MCF 10A (cell line): ENCODE measurements at regions of chr11 and their contacts with region 1.

Region 1: GRCh38 chr11:13949876-13950275 is 12.6 kb upstream of the SPON1 start:
- DNase-seq: no peak
- H3K4me3 Mint-ChIP-seq: no peak overlapping the region
- H3K27ac Mint-ChIP-seq: no peak overlapping the region
- H3K4me1 Mint-ChIP-seq: no peaks in the 10 kb centered on the region
- H3K27me3 Mint-ChIP-seq: no peaks in the 10 kb centered on the region
- CTCF ChIP-seq: no peak

Region 2: DNA sequence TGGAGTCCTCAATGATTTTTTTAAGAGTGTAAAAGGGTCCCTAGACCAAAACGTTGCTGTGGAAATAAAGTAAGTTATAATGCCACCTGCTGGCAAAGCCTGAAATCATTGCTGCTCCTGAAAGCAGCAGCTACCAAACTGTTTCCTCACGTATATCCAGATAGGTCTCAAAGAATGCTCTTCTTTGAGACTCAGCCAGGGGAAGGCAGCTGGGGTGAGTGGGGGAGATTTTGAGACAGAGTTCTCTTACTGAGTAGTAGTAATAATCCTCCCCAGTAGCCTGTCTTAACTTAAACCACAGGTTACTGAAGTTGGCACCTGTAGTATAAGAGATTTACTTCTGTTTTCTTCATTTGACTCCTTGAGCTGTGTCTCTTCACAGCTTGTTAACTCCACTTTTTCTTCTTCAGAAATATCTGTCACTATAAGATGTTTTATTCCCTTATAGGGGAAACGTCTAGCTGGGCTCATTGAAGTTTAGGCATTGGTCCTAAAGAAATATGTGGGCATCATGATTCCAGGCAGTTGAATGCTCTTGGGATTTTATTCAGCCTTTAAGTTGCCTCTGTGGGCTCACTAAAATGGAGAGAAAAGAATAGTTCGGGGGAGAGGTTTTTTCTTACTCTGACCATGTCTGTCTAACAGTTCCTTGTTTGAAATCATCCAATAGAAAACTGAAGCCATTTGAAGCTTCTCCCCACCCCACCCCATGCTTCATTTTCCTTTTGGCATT is 564.8 kb before region 1 on chr11:
- CTCF ChIA-PET with region 1: no interaction called
- POLR2A ChIA-PET with region 1: no interaction called
- intact Hi-C with region 1: no loop called
- DNase-seq: peak; percentile 34
- H3K4me3 Mint-ChIP-seq: no peak overlapping the region
- H3K27ac Mint-ChIP-seq: no peak overlapping the region
- H3K4me1 Mint-ChIP-seq: no peaks in the 10 kb centered on the region
- H3K27me3 Mint-ChIP-seq: no peaks in the 10 kb centered on the region
- CTCF ChIP-seq: peak; percentile 58

Region 3: DNA sequence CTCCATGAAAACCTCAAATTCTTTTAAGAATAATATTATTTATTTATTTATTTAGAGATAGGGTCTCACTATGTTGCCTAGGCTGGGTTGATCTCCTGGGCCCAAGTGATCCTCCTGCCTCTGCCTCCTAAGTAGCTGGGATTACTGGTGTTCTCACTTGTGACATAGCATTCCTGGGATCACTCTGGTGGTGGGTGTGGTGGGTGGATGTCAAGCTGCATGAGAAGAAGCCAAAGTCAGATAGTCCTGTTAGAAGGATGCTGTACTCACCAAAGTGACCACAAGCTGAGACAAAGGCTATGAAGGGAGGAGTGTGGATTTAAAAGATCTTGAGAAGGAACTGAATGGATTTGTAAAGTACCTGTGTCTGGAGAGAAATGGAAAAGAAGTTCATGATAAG is 75.3 kb before region 1 on chr11:
- CTCF ChIA-PET with region 1: interaction called, 6 read pairs
- POLR2A ChIA-PET with region 1: no interaction called
- intact Hi-C with region 1: loop called (anchors 5 kb)
- DNase-seq: no peak
- H3K4me3 Mint-ChIP-seq: no peak overlapping the region
- H3K27ac Mint-ChIP-seq: no peak overlapping the region
- H3K4me1 Mint-ChIP-seq: peaks cover 20% of the 10 kb centered on the region
- H3K27me3 Mint-ChIP-seq: peaks cover 19% of the 10 kb centered on the region
- CTCF ChIP-seq: no peak

Region 4: GRCh38 chr11:14054116-14055107 is 104.5 kb after region 1 on chr11:
- CTCF ChIA-PET with region 1: no interaction called
- POLR2A ChIA-PET with region 1: no interaction called
- intact Hi-C with region 1: no loop called
- DNase-seq: no peak
- H3K4me3 Mint-ChIP-seq: no peak overlapping the region
- H3K27ac Mint-ChIP-seq: no peak overlapping the region
- H3K4me1 Mint-ChIP-seq: no peaks in the 10 kb centered on the region
- H3K27me3 Mint-ChIP-seq: peaks cover 51% of the 10 kb centered on the region
- CTCF ChIP-seq: no peak

Region 5: GRCh38 chr11:14249121-14249963 is 299.5 kb after region 1 on chr11:
- CTCF ChIA-PET with region 1: interaction called, 62 read pairs
- POLR2A ChIA-PET with region 1: no interaction called
- intact Hi-C with region 1: no loop called
- DNase-seq: peak; percentile 75
- H3K4me3 Mint-ChIP-seq: no peak overlapping the region
- H3K27ac Mint-ChIP-seq: no peak overlapping the region
- H3K4me1 Mint-ChIP-seq: no peaks in the 10 kb centered on the region
- H3K27me3 Mint-ChIP-seq: peaks cover 69% of the 10 kb centered on the region
- CTCF ChIP-seq: peak; percentile 88